Transverse colon (tissue), 4 donors: ENCODE measurements at regions of chr6 and their contacts with region 1.

Region 1: DNA sequence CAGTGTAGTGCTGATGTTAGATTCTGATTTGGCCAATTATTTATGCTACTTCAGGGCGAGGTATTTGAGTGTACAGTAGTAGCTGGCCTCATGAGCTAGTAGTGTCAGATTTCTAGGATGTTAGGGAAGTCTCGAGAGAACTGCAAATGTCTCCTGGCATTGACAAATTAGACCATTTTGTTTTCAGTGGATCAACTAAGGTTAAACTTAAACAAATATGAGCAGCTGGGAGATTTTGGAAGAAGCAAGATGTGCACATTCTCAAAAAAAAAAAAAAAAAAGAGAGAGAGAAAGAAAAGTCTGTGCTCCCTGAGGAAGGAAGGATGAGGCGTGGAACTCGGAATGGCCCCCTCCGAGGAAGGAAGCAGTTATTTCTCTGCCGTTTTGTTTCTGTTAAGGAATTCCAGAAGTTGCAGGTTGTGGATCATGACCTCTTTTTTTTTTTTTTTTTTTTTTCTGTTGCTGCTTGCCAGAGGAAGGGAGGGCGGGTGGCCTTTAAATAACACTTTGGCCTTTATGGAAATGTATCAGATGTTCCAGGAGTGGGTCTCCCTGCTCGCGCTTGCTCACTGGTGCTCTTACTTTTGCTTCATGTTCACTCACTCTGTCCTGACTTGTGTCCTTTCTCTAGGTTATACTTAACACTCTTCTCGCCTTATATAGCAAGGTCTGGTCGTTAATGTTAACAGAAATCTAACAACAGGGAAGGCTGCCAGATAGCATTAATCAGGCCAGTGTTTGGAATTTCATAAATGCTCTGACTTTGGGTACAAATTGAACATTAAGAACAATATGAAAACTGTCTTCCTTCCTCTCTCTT is 124.4 kb downstream of the TCP11 start:
- DNase-seq: no peak
- H3K4me3 ChIP-seq: peak overlapping the region in 3 of 4 donors; percentile 24 to 48 (median 40)
- H3K27ac ChIP-seq: peak overlapping the region; percentile 88 to 93 (median 92)
- H3K4me1 ChIP-seq: peaks cover 14 to 33% (median 25%) of the 10 kb centered on the region in 4 donors
- H3K27me3 ChIP-seq: no peaks in the 10 kb centered on the region
- CTCF ChIP-seq: no peak
- EP300 ChIP-seq: no peak
- POLR2A ChIP-seq: no peak

Region 2: GRCh38 chr6:34792236-34792867 is 224.4 kb before region 1 on chr6:
- in situ Hi-C with region 1: no loop called
- intact Hi-C with region 1: no loop called
- DNase-seq: peak; percentile 38
- H3K4me3 ChIP-seq: peak overlapping the region; percentile 64 to 100 (median 84)
- H3K27ac ChIP-seq: peak overlapping the region; percentile 89 to 98 (median 93)
- H3K4me1 ChIP-seq: peaks cover 0 to 21% (median 15%) of the 10 kb centered on the region in 4 donors
- H3K27me3 ChIP-seq: no peaks in the 10 kb centered on the region
- CTCF ChIP-seq: no peak
- EP300 ChIP-seq: no peak
- POLR2A ChIP-seq: no peak

Region 3: GRCh38 chr6:35048631-35049083 is 31.9 kb after region 1 on chr6:
- in situ Hi-C with region 1: no loop called
- intact Hi-C with region 1: loop called (anchors 2 kb)
- DNase-seq: peak; percentile 50
- H3K4me3 ChIP-seq: no peak overlapping the region
- H3K27ac ChIP-seq: peak overlapping the region; percentile 85 to 91 (median 90)
- H3K4me1 ChIP-seq: peaks cover 75 to 99% (median 79%) of the 10 kb centered on the region in 4 donors
- H3K27me3 ChIP-seq: no peaks in the 10 kb centered on the region
- CTCF ChIP-seq: peak in 2 of 5 experiments; percentile 18 to 21
- EP300 ChIP-seq: no peak
- POLR2A ChIP-seq: peak; percentile 43

Region 4: GRCh38 chr6:35089935-35090505 is 73.3 kb after region 1 on chr6:
- in situ Hi-C with region 1: no loop called
- intact Hi-C with region 1: loop called (anchors 10 kb)
- DNase-seq: no peak
- H3K4me3 ChIP-seq: no peak overlapping the region
- H3K27ac ChIP-seq: peak overlapping the region; percentile 32 to 71 (median 60)
- H3K4me1 ChIP-seq: peaks cover 0 to 32% (median 13%) of the 10 kb centered on the region in 4 donors
- H3K27me3 ChIP-seq: no peaks in the 10 kb centered on the region
- CTCF ChIP-seq: no peak
- EP300 ChIP-seq: no peak
- POLR2A ChIP-seq: no peak